ENCODE measurements at regions of chr1 and their contacts with region 1.

Region 1: GRCh38 chr1:153990468-153991150 is at the start of gene RPS27:
- DNase-seq: peak; percentile 96 to 99 (median 99)
- H3K4me3 ChIP-seq: peak within 1 kb of the TSS; percentile 90 to 97 (median 95)
- H3K4me3 Mint-ChIP-seq: peak within 1 kb of the TSS; percentile 91 to 97
- H3K27ac ChIP-seq: peak within 1 kb of the TSS; percentile 85 to 100
- H3K27ac Mint-ChIP-seq: peak within 1 kb of the TSS; percentile 98 to 100 (median 100)
- H3K4me1 ChIP-seq: peaks cover 29 to 43% of the 10 kb centered on the region in 2 donors
- H3K4me1 Mint-ChIP-seq: peaks cover 35% of the 10 kb centered on the region
- H3K27me3 ChIP-seq: no peaks in the 10 kb centered on the region
- H3K27me3 Mint-ChIP-seq: peaks cover 0 to 2% (median 0%) of the 10 kb centered on the region in 3 donors
- CTCF ChIP-seq: no peak
- polyA plus RNA-seq, gene RPS27: 4,186 to 7,443 (median 4,309) TPM

Region 2: DNA sequence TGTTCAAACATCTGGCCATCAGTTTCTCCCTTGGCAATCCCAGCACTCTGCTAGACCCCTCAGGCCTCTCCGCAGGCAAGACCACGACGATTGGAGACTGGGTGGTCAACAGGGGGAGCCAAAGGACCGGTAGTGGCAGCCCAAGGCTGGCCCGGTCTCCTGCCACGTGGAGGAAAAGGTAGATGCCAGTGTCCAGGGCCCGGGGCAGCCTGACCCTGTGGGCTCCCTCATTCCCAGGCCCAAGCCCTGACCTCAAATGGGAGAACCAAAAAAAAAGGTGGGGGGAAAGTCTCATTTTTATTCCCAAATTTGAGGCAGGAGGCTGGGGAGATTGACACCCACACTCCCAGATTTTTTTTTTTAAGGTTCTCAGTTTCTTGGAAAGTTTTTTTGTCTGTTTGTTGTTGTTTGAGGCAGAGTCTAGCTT is 479.6 kb before region 1 on chr1:
- intact Hi-C with region 1: loop called in 1 of 2 experiments (anchors 2 kb)
- DNase-seq: peak; percentile 57 to 82 (median 79)
- H3K4me3 ChIP-seq: no peak overlapping the region
- H3K4me3 Mint-ChIP-seq: no peak overlapping the region
- H3K27ac ChIP-seq: no peak overlapping the region
- H3K27ac Mint-ChIP-seq: peak overlapping the region in 1 of 7 donors; percentile 18
- H3K4me1 ChIP-seq: peaks cover 35 to 41% of the 10 kb centered on the region in 2 donors
- H3K4me1 Mint-ChIP-seq: peaks cover 47% of the 10 kb centered on the region
- H3K27me3 ChIP-seq: no peaks in the 10 kb centered on the region
- H3K27me3 Mint-ChIP-seq: peaks cover 0 to 9% (median 3%) of the 10 kb centered on the region in 3 donors
- CTCF ChIP-seq: peak; percentile 88

Region 3: GRCh38 chr1:153677718-153678505 is 312.7 kb before region 1 on chr1:
- intact Hi-C with region 1: loop called in 1 of 2 experiments (anchors 5 kb)
- DNase-seq: peak in 2 of 3 donors; percentile 56 to 57
- H3K4me3 ChIP-seq: peak overlapping the region in 2 of 3 experiments; percentile 28 to 78
- H3K4me3 Mint-ChIP-seq: peak overlapping the region; percentile 84 to 96
- H3K27ac ChIP-seq: no peak overlapping the region
- H3K27ac Mint-ChIP-seq: peak overlapping the region in 1 of 7 donors; percentile 68
- H3K4me1 ChIP-seq: peaks cover 18 to 27% of the 10 kb centered on the region in 2 donors
- H3K4me1 Mint-ChIP-seq: peaks cover 24% of the 10 kb centered on the region
- H3K27me3 ChIP-seq: peaks cover 19 to 41% of the 10 kb centered on the region in 2 donors
- H3K27me3 Mint-ChIP-seq: peaks cover 45 to 48% (median 46%) of the 10 kb centered on the region in 3 donors
- CTCF ChIP-seq: peak; percentile 95

Region 4: DNA sequence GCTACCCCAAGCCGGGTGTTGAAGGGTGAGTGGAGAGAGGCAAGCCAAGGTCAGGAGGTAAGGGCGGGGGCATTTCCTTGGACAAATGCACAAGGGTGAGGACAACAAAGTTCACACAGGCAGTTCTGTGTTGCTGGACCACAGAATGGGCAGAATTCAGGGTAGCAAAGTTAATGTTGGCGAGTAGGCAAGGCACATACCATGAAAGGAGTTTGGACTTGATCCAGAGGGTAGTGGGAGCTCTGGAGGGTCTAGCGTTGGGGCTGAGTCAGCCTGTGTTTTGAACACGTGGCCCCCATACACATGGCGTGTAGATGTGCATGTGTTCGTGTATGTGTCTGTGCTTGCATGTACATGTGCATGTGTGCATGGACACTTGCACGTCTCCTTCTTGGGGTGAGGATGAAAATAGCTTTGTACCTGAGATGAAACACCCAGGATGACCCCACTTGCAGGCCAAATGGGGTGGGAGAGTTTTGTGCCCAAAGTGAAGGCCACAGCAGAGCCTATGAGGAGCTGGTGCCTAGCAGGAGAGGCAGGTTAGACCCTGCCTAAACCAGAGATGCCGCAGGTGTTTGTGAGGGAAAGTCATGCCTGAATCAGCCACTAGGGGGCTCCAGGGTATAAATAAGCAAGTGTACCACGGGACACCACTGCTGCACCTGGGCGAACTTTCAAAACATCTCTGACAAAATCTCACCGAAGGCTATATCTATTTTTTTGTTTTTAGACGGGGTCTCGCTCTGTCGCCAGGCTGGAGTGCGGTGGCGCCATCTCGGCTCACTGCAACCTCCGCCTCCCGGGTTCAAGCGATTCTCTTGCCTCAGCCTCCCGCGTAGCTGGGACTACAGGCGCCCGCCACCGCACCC is 193.6 kb before region 1 on chr1:
- intact Hi-C with region 1: loop called (anchors 5 kb)
- DNase-seq: peak; percentile 47 to 71 (median 68)
- H3K4me3 ChIP-seq: no peak overlapping the region
- H3K4me3 Mint-ChIP-seq: no peak overlapping the region
- H3K27ac ChIP-seq: no peak overlapping the region
- H3K27ac Mint-ChIP-seq: peak overlapping the region in 4 of 7 donors; percentile 16 to 67 (median 44)
- H3K4me1 ChIP-seq: peaks cover 7 to 10% of the 10 kb centered on the region in 2 donors
- H3K4me1 Mint-ChIP-seq: peaks cover 18% of the 10 kb centered on the region
- H3K27me3 ChIP-seq: no peaks in the 10 kb centered on the region
- H3K27me3 Mint-ChIP-seq: peaks cover 1 to 5% (median 2%) of the 10 kb centered on the region in 3 donors
- CTCF ChIP-seq: peak; percentile 98

Region 5: GRCh38 chr1:153816283-153816889 is 174.2 kb before region 1 on chr1:
- intact Hi-C with region 1: loop called in 1 of 2 experiments (anchors 2 kb)
- DNase-seq: no peak
- H3K4me3 ChIP-seq: no peak overlapping the region
- H3K4me3 Mint-ChIP-seq: no peak overlapping the region
- H3K27ac ChIP-seq: no peak overlapping the region
- H3K27ac Mint-ChIP-seq: peak overlapping the region in 1 of 7 donors; percentile 42
- H3K4me1 ChIP-seq: no peaks in the 10 kb centered on the region
- H3K4me1 Mint-ChIP-seq: peaks cover 2% of the 10 kb centered on the region
- H3K27me3 ChIP-seq: no peaks in the 10 kb centered on the region
- H3K27me3 Mint-ChIP-seq: peaks cover 0 to 4% (median 2%) of the 10 kb centered on the region in 3 donors
- CTCF ChIP-seq: no peak

Region 6: DNA sequence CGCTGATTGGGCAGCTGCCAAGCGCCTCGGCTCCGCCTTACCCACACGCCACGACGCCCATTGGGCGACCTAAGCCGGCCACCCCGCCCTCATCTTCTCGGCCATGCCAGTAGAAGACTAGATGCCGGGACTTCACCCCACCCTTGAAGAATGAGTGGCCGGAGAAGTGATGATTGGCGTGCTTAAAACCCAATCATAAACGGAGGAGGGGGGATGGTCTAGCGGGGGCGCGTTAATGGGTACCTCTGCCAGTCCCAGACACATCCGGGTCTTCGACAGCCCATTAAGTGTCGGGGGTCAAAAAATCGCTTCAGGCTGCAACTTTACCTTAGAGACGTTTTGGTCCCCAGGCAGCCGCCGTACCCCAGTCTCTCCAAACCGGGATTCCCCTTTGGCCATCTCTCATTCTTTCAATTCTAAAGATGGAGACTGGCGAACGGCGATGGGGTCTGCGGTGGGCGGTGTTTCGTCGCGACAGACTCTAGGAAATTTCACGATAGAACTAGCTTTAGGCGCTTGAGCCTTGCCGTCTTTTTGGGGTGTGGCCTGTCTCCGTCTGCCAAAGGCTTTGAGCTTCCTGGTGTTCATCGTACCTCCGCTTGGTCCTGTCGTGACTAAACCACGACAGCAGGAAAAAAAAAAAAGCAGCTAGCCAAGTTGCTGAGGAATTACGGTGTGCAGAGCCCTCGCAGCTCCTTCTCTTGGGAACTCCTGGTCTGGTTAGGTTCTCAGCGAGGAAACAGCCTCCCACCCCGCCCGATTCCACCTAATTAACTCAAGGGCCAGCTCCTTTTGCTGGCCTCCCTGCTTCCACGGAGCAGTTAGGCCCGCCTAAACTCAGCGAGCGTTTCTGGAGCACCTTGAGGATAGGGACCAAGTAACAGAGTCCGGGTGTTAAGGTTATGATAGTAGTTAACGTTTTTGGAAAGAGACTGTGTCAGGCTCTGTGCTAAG is 67.4 kb before region 1 on chr1 and contains the start of gene GATAD2B:
- intact Hi-C with region 1: loop called in 1 of 2 experiments (anchors 5 kb)
- DNase-seq: peak; percentile 99 to 100 (median 100)
- H3K4me3 ChIP-seq: peak within 1 kb of the TSS; percentile 80 to 89 (median 83)
- H3K4me3 Mint-ChIP-seq: peak within 1 kb of the TSS; percentile 95
- H3K27ac ChIP-seq: peak within 1 kb of the TSS; percentile 87 to 93
- H3K27ac Mint-ChIP-seq: peak within 1 kb of the TSS; percentile 90 to 97 (median 95)
- H3K4me1 ChIP-seq: peaks cover 31 to 39% of the 10 kb centered on the region in 2 donors
- H3K4me1 Mint-ChIP-seq: peaks cover 38% of the 10 kb centered on the region
- H3K27me3 ChIP-seq: no peaks in the 10 kb centered on the region
- H3K27me3 Mint-ChIP-seq: peaks cover 0 to 3% (median 0%) of the 10 kb centered on the region in 3 donors
- CTCF ChIP-seq: no peak
- polyA plus RNA-seq, gene GATAD2B: 1.1 to 11.0 (median 2.0) TPM

Region 7: DNA sequence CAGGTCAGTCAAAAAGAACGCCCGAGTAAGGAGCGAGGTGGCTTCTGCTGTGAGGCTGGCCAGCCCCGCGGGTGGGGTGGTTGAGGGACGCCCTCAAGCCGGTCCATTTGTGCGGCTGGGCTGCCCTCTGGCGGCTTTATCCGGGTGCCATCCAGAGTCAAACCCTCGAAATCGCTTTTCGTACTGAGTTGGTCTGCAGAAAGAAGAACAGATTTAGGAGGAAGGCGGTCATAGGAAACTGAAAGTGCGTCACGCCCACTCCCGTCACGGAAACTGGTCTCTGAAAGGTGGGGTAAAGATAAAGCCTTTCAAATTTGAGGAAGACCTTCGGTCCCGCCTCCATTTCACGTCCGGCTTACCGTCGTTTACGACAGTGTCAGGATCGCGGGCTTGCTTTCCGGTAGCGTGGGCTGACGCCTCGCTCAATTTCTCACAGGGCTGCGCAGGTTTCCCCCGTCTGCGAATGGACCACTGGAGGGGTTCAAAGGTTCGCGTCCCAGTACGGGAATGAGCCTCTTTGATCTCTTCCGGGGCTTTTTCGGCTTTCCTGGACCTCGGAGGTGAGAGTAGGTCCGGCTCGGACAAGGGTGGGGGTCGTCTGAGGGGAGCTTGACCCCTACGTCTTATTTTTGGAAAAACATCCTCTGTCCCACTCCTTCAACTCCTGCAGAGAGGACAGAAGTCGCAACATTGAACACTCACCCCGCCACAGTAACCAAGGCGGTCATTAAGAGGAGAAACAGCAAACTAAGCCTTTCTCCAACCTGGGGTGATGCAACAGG is 281.8 kb after region 1 on chr1 and contains the start of gene HAX1:
- intact Hi-C with region 1: loop called in 1 of 2 experiments (anchors 5 kb)
- DNase-seq: peak; percentile 98 to 99 (median 99)
- H3K4me3 ChIP-seq: peak within 1 kb of the TSS; percentile 71 to 93 (median 76)
- H3K4me3 Mint-ChIP-seq: peak within 1 kb of the TSS; percentile 95 to 98
- H3K27ac ChIP-seq: peak within 1 kb of the TSS; percentile 88 to 94
- H3K27ac Mint-ChIP-seq: peak within 1 kb of the TSS; percentile 96 to 99 (median 97)
- H3K4me1 ChIP-seq: peaks cover 16 to 20% of the 10 kb centered on the region in 2 donors
- H3K4me1 Mint-ChIP-seq: peaks cover 23% of the 10 kb centered on the region
- H3K27me3 ChIP-seq: no peaks in the 10 kb centered on the region
- H3K27me3 Mint-ChIP-seq: peaks cover 0 to 3% (median 0%) of the 10 kb centered on the region in 3 donors
- CTCF ChIP-seq: peak; percentile 83
- polyA plus RNA-seq, gene HAX1: 51.4 to 94.9 (median 91.7) TPM

Measured in CD14-positive monocyte (primary cell).